Cardiac septum (tissue), 1 donor: ENCODE measurements at regions of chr1 and their contacts with region 1.

Region 1: GRCh38 chr1:71049951-71050598 is 2.5 kb upstream of the PTGER3 start:
- DNase-seq: no peak

Region 2: GRCh38 chr1:70528590-70529333 is 521.3 kb before region 1 on chr1:
- intact Hi-C with region 1: loop called (anchors 2 kb)
- DNase-seq: no peak

Region 3: DNA sequence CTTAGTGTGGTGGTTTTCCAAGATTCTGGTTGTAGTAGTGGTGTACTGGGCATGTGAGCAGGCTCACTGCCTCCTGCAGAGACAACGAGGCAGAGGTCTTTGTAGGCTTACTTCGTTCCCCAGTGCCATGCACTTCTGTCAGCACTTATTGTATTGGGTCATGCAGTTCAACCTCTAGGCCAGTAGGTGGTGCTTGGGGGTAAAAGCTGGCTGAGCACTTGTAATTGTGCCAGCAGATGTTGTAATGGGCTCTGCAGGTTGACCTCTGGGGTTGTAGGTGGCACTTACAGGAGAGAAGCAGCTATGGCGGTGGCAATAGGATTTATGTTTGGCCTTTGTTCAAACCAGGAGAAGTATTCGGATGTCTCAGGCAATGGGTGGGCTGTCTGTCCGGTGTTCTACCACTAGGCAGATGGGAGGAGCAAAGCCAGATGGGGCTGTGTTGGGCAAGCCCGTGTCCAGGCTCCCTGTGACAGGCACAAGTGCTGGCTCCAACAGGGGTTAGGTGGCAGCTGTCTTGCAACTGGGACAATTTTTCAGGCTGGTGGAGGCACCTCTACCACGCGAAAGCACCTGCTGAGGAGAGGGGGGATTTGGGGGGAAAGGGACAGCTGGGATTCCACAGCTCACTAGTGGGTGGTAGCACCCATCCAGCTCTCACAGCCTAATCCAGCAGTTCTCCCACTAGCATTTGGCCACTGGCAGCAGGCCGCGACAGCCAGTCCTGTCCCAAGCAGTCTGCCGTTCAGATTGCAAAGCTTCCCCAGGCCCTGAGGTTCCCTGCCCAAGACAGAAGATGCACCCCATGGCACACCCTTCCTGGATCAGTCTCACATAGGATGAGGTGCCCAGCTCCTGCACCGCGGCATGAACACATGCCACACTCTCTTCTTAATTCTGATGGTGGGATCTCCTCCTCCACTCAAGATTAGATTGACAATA is 364.5 kb before region 1 on chr1:
- intact Hi-C with region 1: loop called (anchors 2 kb)
- DNase-seq: no peak